Heart right ventricle (tissue), 16 donors: ENCODE measurements at regions of chr11 and their contacts with region 1.

Region 1: DNA sequence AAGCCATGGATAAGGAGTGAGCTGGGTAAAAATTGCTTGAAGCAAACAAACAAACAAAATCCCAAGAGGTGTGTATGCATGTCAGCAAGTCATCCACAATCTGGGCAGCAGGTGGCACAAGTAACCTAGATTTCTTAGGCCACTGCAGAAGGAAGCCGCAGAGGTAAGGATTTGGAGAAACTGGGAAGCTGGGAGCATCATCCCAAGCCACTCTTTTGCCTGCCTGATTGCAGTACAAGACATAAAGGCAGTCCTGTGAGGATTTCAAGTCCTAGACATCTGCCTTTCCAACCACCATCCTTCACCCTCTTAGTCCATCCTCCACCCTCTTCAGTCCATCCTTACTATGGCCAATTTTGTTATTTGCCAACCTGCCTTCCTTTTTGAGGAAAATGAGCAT is 67.2 kb upstream of the BMAL1 start:
- DNase-seq: peak in 1 of 2 donors; percentile 55
- ATAC-seq: peak in 7 of 8 donors; percentile 48 to 75 (median 68)
- H3K4me3 ChIP-seq: no peak overlapping the region
- H3K27ac ChIP-seq: no peak overlapping the region
- H3K4me1 ChIP-seq: peaks cover 0 to 27% (median 7%) of the 10 kb centered on the region in 9 donors
- H3K27me3 ChIP-seq: peaks cover 0 to 7% (median 0%) of the 10 kb centered on the region in 7 donors
- CTCF ChIP-seq: peak; percentile 40 to 77 (median 60)

Region 2: DNA sequence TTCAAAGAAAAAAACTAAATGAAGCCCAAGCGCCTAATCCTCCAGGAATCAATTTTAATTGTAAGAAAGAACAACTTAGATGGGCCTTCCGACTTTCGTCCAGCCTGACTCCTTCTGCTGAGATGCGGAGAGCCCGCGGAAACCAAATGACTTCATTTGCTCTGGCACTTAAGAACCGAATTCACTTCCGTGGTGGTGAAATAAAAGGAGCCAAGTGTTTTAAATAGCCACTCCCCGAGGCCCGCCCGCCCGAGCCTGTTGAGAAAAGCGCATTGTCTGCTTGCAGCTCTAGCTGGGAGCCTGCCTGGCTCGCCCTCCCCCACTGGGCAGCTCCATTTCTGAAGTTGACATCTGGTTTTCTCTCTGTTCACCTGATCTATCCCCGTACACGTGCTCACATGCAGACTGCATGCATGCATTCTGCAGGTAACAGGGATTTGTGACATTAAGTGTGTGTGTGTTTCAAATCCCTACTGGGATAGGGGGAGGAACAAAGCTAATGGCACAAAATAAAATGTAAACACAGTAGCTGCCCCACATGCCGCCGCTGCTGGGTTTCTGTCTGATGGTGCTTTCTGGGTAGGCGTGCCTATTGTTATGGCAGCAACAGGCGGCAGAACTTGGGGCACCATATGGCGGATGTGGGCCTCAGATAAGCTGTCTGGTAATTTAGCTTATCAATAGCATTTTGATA is 530.0 kb before region 1 on chr11:
- intact Hi-C with region 1: no loop called
- DNase-seq: peak; percentile 82
- ATAC-seq: peak; percentile 82 to 92 (median 87)
- H3K4me3 ChIP-seq: peak overlapping the region in 4 of 10 donors; percentile 16 to 25 (median 22)
- H3K27ac ChIP-seq: peak overlapping the region in 7 of 10 donors; percentile 28 to 60 (median 37)
- H3K4me1 ChIP-seq: peaks cover 0 to 84% (median 64%) of the 10 kb centered on the region in 9 donors
- H3K27me3 ChIP-seq: peaks cover 0 to 62% (median 0%) of the 10 kb centered on the region in 7 donors
- CTCF ChIP-seq: no peak

Region 3: DNA sequence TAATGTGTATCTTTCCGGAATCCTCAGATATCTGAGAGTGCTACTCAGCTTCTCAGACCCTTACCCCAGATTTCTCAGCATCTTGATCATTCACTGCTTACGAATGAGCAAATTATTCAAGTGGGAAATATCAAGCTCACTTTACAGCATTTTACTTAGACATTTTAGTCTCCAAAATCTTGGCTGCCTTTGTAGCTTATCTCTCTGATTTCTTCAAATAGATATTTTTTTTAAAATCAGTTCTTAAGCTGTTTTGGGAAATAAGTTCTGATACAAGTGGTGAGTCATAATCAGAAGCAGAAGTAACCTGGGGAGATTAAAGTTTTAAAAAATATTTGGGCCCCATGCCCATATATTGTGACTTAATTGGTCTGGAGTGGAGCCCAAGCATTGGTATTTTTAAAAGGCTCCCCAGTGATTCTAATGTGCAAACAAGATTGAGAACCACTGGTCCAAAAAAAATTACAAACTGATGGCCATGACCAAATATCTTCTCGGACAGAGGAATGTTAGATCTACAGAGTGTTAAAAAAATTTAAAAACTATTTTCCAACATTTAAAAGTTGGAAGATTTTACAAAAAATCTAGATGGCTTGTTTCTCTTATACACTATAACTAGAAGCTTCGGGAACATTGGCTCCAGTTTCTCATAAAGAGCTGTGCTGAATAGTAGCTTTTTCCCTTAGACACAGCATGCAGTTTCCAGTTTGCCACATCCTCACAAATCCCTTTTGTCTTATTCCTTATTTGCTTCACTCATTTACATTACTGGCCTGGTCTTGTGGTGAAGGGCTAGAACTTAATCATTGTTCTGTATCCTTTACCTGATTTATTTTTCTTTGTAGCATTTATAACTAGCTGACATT is 20.6 kb before region 1 on chr11:
- intact Hi-C with region 1: no loop called
- DNase-seq: no peak
- ATAC-seq: no peak
- H3K4me3 ChIP-seq: no peak overlapping the region
- H3K27ac ChIP-seq: no peak overlapping the region
- H3K4me1 ChIP-seq: no peaks in the 10 kb centered on the region
- H3K27me3 ChIP-seq: peaks cover 0 to 11% (median 0%) of the 10 kb centered on the region in 7 donors
- CTCF ChIP-seq: no peak

Region 4: DNA sequence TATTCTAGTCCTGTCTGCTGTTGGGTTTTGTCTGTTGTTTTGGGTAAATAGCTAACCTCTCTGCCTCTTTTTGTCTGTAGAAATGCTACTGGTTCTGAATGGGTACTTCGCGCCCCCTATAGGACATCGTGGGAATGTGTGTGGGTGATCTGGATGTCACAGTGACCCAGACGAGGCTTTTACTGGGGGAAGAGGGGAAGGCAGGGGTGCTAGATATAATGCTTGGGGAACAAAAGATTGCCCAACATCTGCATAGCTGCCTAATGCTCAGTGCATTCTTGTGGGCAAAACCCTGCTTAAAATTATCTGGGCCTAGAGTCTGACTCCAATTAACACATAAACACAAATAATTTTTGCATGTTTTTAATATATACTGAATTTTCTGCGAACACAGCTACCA is 124.9 kb after region 1 on chr11:
- intact Hi-C with region 1: loop called in 3 of 10 experiments (anchors 2 to 5 kb)
- DNase-seq: peak; percentile 43 to 54
- ATAC-seq: peak in 3 of 8 donors; percentile 32 to 56 (median 43)
- H3K4me3 ChIP-seq: no peak overlapping the region
- H3K27ac ChIP-seq: no peak overlapping the region
- H3K4me1 ChIP-seq: peaks cover 1 to 89% (median 76%) of the 10 kb centered on the region in 9 donors
- H3K27me3 ChIP-seq: no peaks in the 10 kb centered on the region
- CTCF ChIP-seq: peak; percentile 51 to 84 (median 78)

Region 5: DNA sequence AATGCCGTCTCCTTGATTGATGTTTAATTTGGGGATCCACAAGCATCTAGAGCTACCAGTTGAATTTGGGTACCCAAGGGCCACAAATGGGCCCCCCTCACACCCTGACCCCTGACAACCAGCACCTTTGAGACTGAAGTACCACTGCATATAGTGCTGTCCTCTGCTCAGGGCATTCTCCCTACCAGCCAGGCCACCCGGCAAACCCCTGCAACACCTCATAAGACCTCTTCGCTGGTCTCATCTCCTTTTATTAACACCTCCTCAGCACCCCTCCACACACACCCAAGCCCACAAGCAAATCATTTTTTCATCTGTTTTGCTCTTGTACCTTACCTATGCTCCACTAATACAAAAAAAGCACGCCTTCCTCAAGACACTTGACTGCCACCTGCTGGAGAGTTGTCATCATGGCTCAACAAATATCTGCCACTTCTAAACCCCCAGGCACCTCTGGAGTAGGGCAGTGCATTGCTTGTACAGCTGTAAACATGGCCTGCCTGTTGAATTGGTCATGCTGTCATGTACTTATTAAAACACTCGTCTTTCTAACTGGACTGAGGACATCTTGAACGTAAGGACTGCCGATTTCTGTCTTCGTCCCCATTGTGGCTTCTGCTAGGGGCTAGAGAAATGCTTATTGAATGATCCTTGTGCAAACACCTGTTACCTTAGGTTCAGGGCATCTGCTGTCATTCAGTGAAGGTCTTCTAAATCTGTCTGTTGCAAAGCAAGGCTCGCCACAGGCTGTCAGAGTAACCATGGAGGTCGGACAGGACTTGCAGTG is 133.7 kb after region 1 on chr11:
- intact Hi-C with region 1: loop called (anchors 1 to 5 kb)
- DNase-seq: peak; percentile 20 to 81
- ATAC-seq: peak in 7 of 8 donors; percentile 25 to 57 (median 29)
- H3K4me3 ChIP-seq: no peak overlapping the region
- H3K27ac ChIP-seq: no peak overlapping the region
- H3K4me1 ChIP-seq: peaks cover 0 to 34% (median 22%) of the 10 kb centered on the region in 9 donors
- H3K27me3 ChIP-seq: no peaks in the 10 kb centered on the region
- CTCF ChIP-seq: peak; percentile 79 to 90 (median 86)

Region 6: GRCh38 chr11:13462901-13463778 is 252.7 kb after region 1 on chr11 and contains the start of gene BTBD10:
- intact Hi-C with region 1: loop called in 1 of 10 experiments (anchors 5 kb)
- DNase-seq: peak; percentile 94 to 95
- ATAC-seq: peak; percentile 99 to 100 (median 99)
- H3K4me3 ChIP-seq: peak within 1 kb of the TSS; percentile 67 to 95 (median 88)
- H3K27ac ChIP-seq: peak within 1 kb of the TSS; percentile 61 to 94 (median 90)
- H3K4me1 ChIP-seq: peaks cover 0 to 40% (median 24%) of the 10 kb centered on the region in 9 donors
- H3K27me3 ChIP-seq: peaks cover 0 to 4% (median 0%) of the 10 kb centered on the region in 7 donors
- CTCF ChIP-seq: no peak
- total RNA-seq, gene BTBD10: 20.6 to 36.5 (median 24.4) TPM